A673 (cell line): ENCODE measurements at regions of chr10 and their contacts with region 1.

Region 1: DNA sequence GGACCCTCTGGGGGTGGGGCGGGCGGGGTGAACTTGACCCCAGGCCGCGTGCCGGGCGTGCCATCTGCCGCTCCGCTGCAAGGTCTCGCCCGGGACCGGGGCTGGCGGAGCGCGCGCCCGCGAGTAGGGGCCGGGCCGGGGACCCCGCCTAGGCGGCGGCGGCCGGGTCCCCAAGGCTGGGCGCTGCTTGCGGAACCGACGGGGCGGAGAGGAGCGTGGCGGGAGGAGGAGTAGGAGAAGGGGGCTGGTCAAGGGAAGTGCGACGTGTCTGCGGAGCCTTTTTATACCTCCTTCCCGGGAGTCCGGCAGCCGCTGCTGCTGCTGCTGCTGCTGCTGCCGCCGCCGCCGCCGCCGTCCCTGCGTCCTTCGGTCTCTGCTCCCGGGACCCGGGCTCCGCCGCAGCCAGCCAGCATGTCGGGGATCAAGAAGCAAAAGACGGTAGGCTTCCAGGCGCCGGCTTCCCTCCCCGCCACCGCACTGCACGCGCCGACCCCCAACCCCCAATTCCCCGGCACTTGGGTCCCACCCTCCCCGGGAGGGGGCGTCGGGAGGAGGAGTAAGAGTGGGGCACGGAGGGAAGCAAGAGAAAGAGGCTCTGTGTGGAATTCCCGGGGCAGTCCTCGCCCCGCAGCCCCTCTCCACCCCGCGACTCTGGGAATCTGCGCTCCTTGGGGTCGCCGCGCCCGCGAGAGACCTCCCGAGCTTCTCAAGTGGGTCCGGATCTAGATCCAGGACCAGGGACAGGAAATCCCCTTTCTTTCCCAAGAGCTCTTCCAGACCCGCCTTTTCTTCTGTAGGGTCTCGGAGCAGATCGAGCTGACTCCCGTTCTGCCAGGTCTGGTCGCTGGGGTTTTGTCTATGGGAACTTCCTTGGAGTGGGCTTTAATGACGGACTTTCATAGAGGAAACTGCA is at the start of gene PAPSS2:
- DNase-seq: peak; percentile 66
- H3K4me3 ChIP-seq: peak within 1 kb of the TSS; percentile 91
- H3K27ac ChIP-seq: peak within 1 kb of the TSS; percentile 69
- H3K4me1 ChIP-seq: peaks cover 22% of the 10 kb centered on the region
- H3K27me3 ChIP-seq: no peaks in the 10 kb centered on the region
- CTCF ChIP-seq: 0 out of 2 replicates have a peak, but pooled peaks have one; percentile 14
- total RNA-seq, gene PAPSS2: 10.2 and 14.0 TPM in 2 replicates

Region 2: DNA sequence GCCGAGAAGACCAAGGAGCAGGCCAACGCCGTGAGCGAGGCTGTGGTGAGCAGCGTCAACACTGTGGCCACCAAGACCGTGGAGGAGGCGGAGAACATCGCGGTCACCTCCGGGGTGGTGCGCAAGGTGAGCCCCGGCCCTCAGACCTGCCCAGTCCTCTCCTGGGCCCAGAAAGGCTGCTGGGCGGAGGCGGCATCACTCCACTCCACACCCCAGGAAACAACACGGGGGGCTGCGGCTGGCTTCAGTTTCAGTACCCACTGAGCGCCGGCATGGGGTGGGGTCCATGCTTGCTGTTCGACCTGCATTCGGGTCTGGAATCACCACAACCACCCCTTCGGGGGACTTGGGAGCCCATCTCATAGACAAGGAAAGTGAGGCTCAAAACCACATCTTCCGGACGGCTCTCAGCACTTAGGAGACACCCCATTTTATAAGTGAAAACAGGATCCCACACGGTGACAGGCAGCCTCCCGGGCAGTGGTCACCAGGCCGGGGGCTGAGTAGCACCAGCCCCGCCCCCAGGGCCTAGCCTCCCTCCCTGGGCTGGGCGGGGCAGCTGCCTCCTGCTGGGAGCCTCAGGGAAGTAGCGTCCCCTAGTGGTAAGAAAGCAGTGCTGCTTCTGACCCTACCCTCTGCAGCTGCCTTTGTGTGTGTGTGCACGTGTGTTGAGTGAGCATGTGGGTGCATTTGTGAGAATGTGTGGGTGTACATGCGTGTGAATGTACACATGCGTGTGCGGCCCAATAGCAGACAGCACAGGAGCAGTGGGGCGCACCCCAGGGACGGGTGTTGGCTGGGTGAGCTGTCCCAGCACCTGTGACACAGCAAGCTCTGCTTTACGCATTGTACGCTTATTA is 699.6 kb before region 1 on chr10:
- CTCF ChIA-PET with region 1: no interaction called
- POLR2A ChIA-PET with region 1: no interaction called
- intact Hi-C with region 1: no loop called
- DNase-seq: peak; percentile 60
- H3K4me3 ChIP-seq: no peak overlapping the region
- H3K27ac ChIP-seq: no peak overlapping the region
- H3K4me1 ChIP-seq: peaks cover 6% of the 10 kb centered on the region
- H3K27me3 ChIP-seq: no peaks in the 10 kb centered on the region
- CTCF ChIP-seq: peak; percentile 88

Region 3: GRCh38 chr10:87734987-87735827 is 75.4 kb after region 1 on chr10:
- CTCF ChIA-PET with region 1: no interaction called
- POLR2A ChIA-PET with region 1: no interaction called
- intact Hi-C with region 1: loop called (anchors 1 kb)
- DNase-seq: peak; percentile 87
- H3K4me3 ChIP-seq: peak overlapping the region; percentile 16
- H3K27ac ChIP-seq: no peak overlapping the region
- H3K4me1 ChIP-seq: peaks cover 6% of the 10 kb centered on the region
- H3K27me3 ChIP-seq: no peaks in the 10 kb centered on the region
- CTCF ChIP-seq: peak; percentile 77

Region 4: GRCh38 chr10:87771871-87772500 is 112.2 kb after region 1 on chr10:
- CTCF ChIA-PET with region 1: no interaction called
- POLR2A ChIA-PET with region 1: no interaction called
- intact Hi-C with region 1: loop called (anchors 2 kb)
- DNase-seq: peak; percentile 57
- H3K4me3 ChIP-seq: no peak overlapping the region
- H3K27ac ChIP-seq: no peak overlapping the region
- H3K4me1 ChIP-seq: peaks cover 14% of the 10 kb centered on the region
- H3K27me3 ChIP-seq: no peaks in the 10 kb centered on the region
- CTCF ChIP-seq: peak; percentile 69

Region 5: DNA sequence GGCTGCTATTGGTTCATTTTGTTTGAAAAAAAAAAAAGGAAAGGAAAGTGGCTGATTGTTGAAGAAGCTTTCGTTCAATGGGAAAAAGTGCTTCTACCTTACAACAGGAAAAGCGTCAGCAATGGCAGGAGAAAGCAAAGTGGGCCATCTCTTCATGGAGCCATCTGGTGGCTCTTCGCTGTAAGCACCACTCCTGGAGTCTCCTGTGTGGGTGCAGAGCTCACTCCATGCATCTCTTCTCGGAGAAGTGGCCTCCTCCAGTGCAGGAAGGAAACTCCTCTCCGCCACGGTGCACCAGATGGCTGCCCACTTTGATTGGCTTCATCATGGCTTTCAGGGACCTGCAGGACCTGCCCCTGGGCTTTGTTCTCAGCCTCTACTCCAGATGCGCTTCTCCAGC is 454.5 kb after region 1 on chr10:
- CTCF ChIA-PET with region 1: no interaction called
- POLR2A ChIA-PET with region 1: no interaction called
- intact Hi-C with region 1: loop called (anchors 5 kb)
- DNase-seq: peak; percentile 81
- H3K4me3 ChIP-seq: no peak overlapping the region
- H3K27ac ChIP-seq: no peak overlapping the region
- H3K4me1 ChIP-seq: peaks cover 4% of the 10 kb centered on the region
- H3K27me3 ChIP-seq: no peaks in the 10 kb centered on the region
- CTCF ChIP-seq: peak; percentile 78

Region 6: GRCh38 chr10:88386821-88387773 is 727.3 kb after region 1 on chr10:
- CTCF ChIA-PET with region 1: no interaction called
- POLR2A ChIA-PET with region 1: no interaction called
- intact Hi-C with region 1: loop called (anchors 5 kb)
- DNase-seq: peak; percentile 73
- H3K4me3 ChIP-seq: no peak overlapping the region
- H3K27ac ChIP-seq: no peak overlapping the region
- H3K4me1 ChIP-seq: peaks cover 14% of the 10 kb centered on the region
- H3K27me3 ChIP-seq: no peaks in the 10 kb centered on the region
- CTCF ChIP-seq: no peak

Region 7: GRCh38 chr10:88553116-88553752 is 893.4 kb after region 1 on chr10:
- CTCF ChIA-PET with region 1: no interaction called
- POLR2A ChIA-PET with region 1: no interaction called
- intact Hi-C with region 1: loop called (anchors 10 kb)
- DNase-seq: peak; percentile 70
- H3K4me3 ChIP-seq: no peak overlapping the region
- H3K27ac ChIP-seq: no peak overlapping the region
- H3K4me1 ChIP-seq: peaks cover 10% of the 10 kb centered on the region
- H3K27me3 ChIP-seq: no peaks in the 10 kb centered on the region
- CTCF ChIP-seq: peak; percentile 82